Posterior cingulate gyrus (tissue), 11 donors: ENCODE measurements at regions of chr3 and their contacts with region 1.

Region 1: DNA sequence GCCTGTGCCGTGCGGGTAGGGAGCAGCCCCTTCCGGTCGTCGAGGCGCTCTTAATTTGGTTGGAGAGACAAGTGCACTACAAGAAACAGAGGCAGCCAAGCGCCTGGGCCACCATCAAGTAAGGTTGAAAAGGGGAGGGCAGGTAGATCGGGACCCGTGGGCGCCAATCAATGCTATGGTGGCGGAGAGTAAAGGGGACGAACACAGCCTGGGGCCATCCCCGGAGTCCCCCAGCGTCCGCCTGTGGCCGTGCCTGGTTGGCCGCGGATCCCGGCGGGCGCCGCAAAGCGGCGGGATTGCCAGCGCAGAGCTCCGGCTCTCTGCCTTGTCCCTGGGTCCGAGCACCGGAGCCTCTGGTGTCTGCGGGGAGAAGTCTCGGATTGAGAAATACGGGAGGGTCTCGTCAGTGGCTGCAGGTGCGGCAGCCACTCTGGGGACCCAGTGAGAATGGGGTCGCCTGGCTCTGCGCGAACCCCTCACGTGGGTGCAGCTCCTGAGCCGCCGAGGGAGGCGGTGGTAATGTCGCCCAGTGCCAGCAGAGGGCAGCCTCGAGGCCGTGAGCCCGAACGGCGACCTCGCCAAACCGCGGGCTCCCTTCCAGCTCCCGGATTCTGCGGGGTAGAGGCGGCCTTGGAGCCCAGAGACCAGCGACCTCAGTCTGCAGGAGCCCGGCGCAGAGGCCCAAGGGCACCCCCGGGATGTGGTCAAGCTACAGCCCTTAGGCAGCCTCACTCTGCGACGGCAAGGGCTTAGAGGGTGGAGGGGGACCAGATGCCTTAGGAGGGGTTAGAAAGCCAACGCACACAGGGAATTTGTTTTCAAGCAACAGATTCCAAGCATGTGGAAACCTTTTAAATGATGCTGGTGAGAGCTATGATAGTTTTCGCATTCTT is 10.8 kb downstream of the FOXL2 start:
- DNase-seq: peak in 9 of 10 donors; percentile 40 to 93 (median 59)

Region 2: DNA sequence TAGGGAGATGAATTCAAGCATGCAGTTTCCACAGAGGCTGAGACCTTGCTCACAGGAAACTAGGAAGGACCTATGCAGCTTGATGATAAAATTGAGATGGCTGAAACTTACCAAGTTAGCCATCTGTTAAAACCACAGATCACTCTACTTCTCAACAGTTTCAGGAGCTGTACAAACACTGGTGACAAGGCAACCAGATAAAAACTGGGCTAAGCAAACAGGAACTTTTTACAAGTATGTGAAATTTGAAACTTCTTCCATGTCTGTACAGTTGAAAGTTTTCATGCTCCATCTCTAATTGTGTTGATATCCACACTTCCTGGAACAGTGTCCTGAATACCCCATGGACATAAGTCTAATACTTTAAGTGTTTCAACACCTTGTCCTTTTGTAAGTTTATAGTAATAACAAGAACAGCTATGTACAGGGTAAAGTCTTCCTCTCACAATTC is 249.3 kb before region 1 on chr3:
- intact Hi-C with region 1: no loop called
- DNase-seq: no peak

Region 3: GRCh38 chr3:138786788-138787278 is 149.3 kb before region 1 on chr3:
- intact Hi-C with region 1: no loop called
- DNase-seq: no peak

Region 4: DNA sequence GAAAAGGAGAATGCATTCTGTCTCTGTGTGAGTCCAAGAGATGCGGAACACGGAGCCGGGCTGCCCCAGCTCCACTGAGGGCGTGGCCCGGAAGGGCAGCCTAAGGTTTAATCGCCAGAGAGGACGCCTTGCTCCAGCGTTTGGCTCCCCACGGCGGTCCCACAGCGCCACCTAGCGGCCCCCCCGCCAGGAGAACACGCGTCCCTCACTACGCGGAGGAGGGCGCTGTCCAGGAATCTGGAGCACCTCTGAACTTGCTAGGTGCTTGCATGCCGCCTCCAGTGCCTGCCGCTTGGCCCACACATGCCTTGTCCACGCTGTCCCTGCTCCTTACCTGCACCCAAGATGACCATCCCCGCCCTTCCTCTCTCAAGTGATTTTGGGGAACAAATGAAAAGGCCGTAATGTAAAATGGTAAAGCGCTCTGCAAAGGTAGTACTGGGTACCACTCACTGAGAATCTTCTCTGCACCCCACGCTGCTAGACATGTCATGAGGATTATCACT is 393.3 kb after region 1 on chr3:
- intact Hi-C with region 1: loop called (anchors 2 kb)
- DNase-seq: peak; percentile 74 to 98 (median 91)